ENCODE measurements at regions of chr21 and their contacts with region 1.

Region 1: DNA sequence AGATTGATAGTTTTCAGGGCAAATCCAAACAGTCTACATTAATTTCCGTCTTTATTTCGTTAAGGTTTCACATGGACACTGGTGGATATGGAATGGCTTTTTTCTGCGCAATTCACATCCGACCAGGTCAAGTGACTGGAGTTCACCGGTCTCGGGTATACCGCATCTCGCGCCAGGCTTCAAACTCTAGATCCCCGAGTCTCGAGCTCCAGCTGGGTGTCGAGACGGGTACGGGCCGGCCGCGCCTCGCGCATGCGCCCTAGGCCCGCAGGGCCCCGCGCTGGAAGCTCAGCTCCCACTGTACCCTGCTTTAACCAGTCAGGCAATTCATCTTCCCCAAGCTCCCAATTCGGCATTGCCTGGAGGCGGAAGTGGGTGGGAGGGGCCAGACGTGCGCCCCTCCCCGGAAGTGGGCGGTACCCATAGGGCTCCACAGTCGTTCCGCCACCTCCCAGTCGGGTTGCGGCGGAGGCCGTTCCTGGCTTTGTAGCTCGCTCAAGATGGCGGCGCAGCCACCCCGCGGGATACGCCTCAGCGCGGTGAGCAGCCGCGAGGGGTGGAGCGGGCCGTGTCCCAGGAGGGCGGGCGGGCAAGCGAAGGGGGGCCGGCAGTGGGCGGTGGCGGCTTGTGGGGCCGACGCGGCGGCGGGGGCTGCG is at the start of gene MORC3:
- DNase-seq: peak; percentile 95 to 99 (median 97)
- ATAC-seq: peak; percentile 89 to 92 (median 90)
- H3K4me3 ChIP-seq: peak within 1 kb of the TSS; percentile 77 to 87
- H3K4me3 Mint-ChIP-seq: peak within 1 kb of the TSS; percentile 94 to 97 (median 95)
- H3K27ac ChIP-seq: peak within 1 kb of the TSS; percentile 61
- H3K27ac Mint-ChIP-seq: peak within 1 kb of the TSS; percentile 95 to 98
- H3K4me1 ChIP-seq: peaks cover 15 to 19% of the 10 kb centered on the region in 2 experiments
- H3K4me1 Mint-ChIP-seq: peaks cover 33 to 48% (median 36%) of the 10 kb centered on the region in 3 donors
- H3K27me3 ChIP-seq: no peaks in the 10 kb centered on the region
- H3K27me3 Mint-ChIP-seq: no peaks in the 10 kb centered on the region
- total RNA-seq, gene MORC3: 53.1 to 74.8 (median 71.6) TPM

Region 2: GRCh38 chr21:35239811-35240219 is 1080.1 kb before region 1 on chr21:
- CTCF ChIA-PET with region 1: no interaction called
- POLR2A ChIA-PET with region 1: no interaction called
- DNase-seq: no peak
- ATAC-seq: no peak
- H3K4me3 ChIP-seq: no peak overlapping the region
- H3K4me3 Mint-ChIP-seq: no peak overlapping the region
- H3K27ac ChIP-seq: no peak overlapping the region
- H3K27ac Mint-ChIP-seq: no peak overlapping the region
- H3K4me1 ChIP-seq: peaks cover 10 to 28% of the 10 kb centered on the region in 2 experiments
- H3K4me1 Mint-ChIP-seq: peaks cover 30 to 46% (median 31%) of the 10 kb centered on the region in 3 donors
- H3K27me3 ChIP-seq: no peaks in the 10 kb centered on the region
- H3K27me3 Mint-ChIP-seq: peaks cover 0 to 4% of the 10 kb centered on the region in 2 donors

Region 3: GRCh38 chr21:36169436-36170128 is 150.3 kb before region 1 on chr21:
- CTCF ChIA-PET with region 1: interaction called in 1 of 2 experiments, 11 read pairs
- POLR2A ChIA-PET with region 1: interaction called, 4 to 14 read pairs
- DNase-seq: no peak
- ATAC-seq: no peak
- H3K4me3 ChIP-seq: no peak overlapping the region
- H3K4me3 Mint-ChIP-seq: no peak overlapping the region
- H3K27ac ChIP-seq: no peak overlapping the region
- H3K27ac Mint-ChIP-seq: no peak overlapping the region
- H3K4me1 ChIP-seq: peaks cover 2 to 13% of the 10 kb centered on the region in 2 experiments
- H3K4me1 Mint-ChIP-seq: peaks cover 6 to 17% (median 6%) of the 10 kb centered on the region in 3 donors
- H3K27me3 ChIP-seq: no peaks in the 10 kb centered on the region
- H3K27me3 Mint-ChIP-seq: no peaks in the 10 kb centered on the region

Region 4: DNA sequence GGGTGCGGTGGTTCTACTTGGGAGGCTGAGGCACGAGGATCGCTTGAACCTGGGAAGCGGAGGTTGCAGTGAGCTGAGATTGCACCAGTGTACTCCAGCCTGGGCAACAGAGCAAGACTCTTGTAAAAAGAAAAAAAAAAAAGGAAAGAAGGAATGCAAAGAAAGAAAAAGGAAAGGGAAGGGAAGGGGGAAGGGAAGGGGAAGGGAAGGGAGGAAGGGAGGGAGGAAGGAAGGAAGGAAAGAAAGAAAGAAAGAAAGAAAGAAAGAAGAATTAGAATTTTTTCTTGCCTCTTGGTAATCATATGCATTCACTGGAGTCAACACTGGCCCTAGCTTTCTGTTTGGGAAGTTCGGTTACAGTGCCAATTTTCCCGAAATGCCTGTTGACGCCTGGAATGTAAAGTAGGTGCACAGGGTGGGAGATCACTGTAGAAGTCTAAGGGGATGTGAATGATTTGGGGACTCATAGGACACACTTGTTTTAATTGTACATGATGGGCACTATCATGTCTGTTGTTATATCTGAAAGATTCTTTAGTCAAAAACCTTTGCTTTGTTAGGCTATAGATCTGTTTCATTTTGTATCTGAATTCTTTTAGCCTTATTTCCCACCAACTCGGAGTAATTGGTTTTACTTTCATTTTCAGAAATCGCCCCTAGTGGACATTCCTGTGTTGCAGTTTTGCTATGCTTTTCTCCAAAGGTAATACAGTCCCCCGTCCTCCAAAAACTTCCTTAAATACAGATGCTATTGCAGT is 59.7 kb before region 1 on chr21:
- CTCF ChIA-PET with region 1: interaction called, 3 to 16 read pairs
- POLR2A ChIA-PET with region 1: interaction called, 3 to 4 read pairs
- DNase-seq: peak in 30 of 35 experiments; percentile 8 to 82 (median 36)
- ATAC-seq: peak; percentile 82 to 90 (median 85)
- H3K4me3 ChIP-seq: peak overlapping the region; percentile 39 to 53
- H3K4me3 Mint-ChIP-seq: peak overlapping the region; percentile 76 to 85 (median 77)
- H3K27ac ChIP-seq: peak overlapping the region; percentile 70
- H3K27ac Mint-ChIP-seq: peak overlapping the region; percentile 90 to 91
- H3K4me1 ChIP-seq: peaks cover 5 to 7% of the 10 kb centered on the region in 2 experiments
- H3K4me1 Mint-ChIP-seq: peaks cover 11 to 23% (median 19%) of the 10 kb centered on the region in 3 donors
- H3K27me3 ChIP-seq: no peaks in the 10 kb centered on the region
- H3K27me3 Mint-ChIP-seq: no peaks in the 10 kb centered on the region

Region 5: DNA sequence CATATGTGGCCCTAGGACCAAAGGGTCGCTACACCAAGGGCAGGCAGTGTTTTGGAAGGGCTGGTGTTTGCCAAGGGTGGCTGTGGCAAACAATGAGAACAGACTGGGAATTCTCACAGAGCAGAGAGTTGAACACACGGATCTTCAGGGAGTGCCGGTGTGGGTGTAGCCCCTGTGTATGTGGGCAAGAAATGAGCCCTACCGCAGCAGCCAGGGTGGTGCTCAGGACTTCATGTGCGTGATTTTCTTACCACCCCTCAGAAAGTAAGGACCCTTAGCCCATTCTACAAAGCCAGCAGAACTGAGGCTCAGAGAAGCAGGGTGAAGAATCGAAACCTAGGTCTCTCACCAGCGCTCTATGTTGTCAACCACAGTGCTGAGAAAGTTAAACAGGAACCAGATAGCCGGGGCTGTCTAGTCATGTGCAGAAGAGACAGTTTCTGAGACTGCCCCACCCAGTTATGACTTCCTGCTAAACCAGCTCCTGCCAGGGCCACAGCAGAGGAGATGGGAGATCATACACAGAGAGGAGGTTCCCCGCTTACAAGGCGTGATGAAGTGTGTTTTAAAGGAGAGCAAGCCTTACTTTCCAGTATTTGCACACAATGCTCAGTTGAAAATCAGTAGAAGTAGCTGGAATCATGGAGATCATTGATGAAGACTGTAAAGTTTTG is 21.8 kb before region 1 on chr21:
- CTCF ChIA-PET with region 1: interaction called, 8 to 41 read pairs
- POLR2A ChIA-PET with region 1: interaction called, 12 to 16 read pairs
- DNase-seq: peak; percentile 47 to 90 (median 74)
- ATAC-seq: peak; percentile 99
- H3K4me3 ChIP-seq: peak overlapping the region; percentile 31 to 56
- H3K4me3 Mint-ChIP-seq: peak overlapping the region; percentile 59 to 82 (median 75)
- H3K27ac ChIP-seq: peak overlapping the region; percentile 83
- H3K27ac Mint-ChIP-seq: peak overlapping the region; percentile 99 to 100
- H3K4me1 ChIP-seq: peaks cover 20 to 43% of the 10 kb centered on the region in 2 experiments
- H3K4me1 Mint-ChIP-seq: peaks cover 30 to 47% (median 35%) of the 10 kb centered on the region in 3 donors
- H3K27me3 ChIP-seq: no peaks in the 10 kb centered on the region
- H3K27me3 Mint-ChIP-seq: no peaks in the 10 kb centered on the region

Region 6: DNA sequence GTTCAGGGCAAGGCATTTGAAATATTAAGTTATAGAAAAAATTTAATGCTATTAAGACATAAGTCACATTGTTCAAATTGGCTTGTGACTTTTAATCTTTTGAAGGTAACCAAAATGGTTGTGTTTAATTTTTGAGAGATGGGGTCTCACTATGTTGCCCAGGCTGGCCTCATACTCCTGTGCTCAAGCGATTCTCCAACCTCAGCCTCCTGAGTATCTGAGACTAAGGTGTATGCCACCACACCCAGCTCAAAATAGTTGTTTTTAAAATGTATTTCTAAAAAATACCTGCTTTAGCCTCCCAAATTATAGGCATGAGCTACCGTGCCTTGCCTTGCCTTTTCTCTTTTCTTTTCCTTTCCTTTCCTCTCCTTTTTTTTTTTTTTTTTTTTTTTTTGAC is 39.3 kb after region 1 on chr21:
- CTCF ChIA-PET with region 1: no interaction called
- POLR2A ChIA-PET with region 1: no interaction called
- DNase-seq: no peak
- ATAC-seq: no peak
- H3K4me3 ChIP-seq: no peak overlapping the region
- H3K4me3 Mint-ChIP-seq: no peak overlapping the region
- H3K27ac ChIP-seq: no peak overlapping the region
- H3K27ac Mint-ChIP-seq: no peak overlapping the region
- H3K4me1 ChIP-seq: no peaks in the 10 kb centered on the region
- H3K4me1 Mint-ChIP-seq: peaks cover 0 to 10% (median 8%) of the 10 kb centered on the region in 3 donors
- H3K27me3 ChIP-seq: no peaks in the 10 kb centered on the region
- H3K27me3 Mint-ChIP-seq: no peaks in the 10 kb centered on the region

Measured in T-cell (primary cell).